ENCODE measurements at regions of chr10 and their contacts with region 1.

Region 1: DNA sequence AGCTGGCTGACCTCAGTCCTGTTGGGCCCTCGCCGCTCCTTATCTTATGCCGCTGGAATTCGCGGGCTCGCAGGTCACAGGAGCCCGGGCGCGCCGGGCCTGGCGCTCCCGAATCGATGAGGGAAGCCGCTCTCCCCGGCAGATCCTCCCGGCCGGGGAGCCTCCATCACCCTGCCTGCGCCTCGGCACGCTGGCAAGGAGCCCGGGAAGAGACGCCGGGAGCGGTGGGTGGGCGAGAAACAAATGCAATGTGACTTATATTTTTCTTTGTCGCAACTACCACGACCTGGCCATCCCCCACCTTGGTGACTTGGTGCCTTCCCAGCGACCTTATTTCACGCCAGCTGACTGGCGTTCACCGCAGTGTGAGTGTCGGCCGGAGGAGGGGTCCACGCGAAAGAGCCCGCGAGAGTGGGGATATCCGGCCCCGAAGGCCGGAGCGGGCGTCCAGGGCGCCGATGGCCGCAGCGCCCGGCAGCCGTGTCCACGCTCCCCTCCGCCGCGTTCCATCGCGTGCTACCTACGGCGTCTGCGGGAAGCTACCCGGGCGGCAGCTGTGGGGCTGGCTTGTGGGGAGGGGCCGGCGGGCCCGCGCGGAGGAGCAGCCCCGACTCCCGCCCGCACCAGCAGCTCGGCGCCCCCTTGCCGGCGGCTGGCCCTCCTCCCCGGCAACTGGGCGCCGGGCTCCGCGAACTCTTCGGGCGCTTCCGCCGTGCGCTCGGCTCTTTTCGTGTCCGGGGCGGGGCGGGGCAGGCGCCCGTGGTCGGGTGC is 494 bp upstream of the BMPR1A start:
- DNase-seq: peak; percentile 84 to 95 (median 91)
- ATAC-seq: peak; percentile 83 to 88 (median 88)
- H3K4me3 ChIP-seq: peak overlapping the region; percentile 58 to 83 (median 78)
- H3K27ac ChIP-seq: peak overlapping the region; percentile 83 to 100 (median 98)
- H3K4me1 ChIP-seq: peaks cover 0 to 45% (median 17%) of the 10 kb centered on the region in 12 donors
- H3K27me3 ChIP-seq: peaks cover 0 to 46% (median 8%) of the 10 kb centered on the region in 9 donors
- CTCF ChIP-seq: no peak
- POLR2A ChIP-seq: peak; percentile 77 to 85

Region 2: DNA sequence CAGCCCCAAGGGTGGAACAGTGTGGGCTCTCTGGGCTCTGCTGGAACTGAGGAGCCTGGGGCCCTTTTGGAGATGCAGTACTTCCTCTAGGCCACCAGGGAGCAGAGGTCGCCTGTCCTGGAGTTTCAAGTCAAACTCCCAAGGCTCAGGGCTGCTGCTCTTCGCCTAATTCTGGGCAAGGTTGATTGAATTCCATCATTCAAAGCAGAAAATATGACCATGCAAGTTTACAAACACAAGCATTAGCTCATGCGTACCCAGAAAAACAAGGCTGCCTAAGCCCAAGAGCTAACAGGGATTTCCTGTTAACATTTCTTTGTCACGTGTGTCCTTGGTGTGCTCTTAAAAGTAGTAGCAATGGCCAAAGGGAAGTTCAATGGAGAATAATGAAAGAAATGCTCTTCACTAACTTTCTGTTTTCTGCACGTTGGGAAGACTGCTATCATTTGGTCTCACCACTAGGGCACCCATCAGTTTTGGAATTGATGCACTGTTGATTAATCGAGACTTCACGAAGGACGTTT is 67.5 kb before region 1 on chr10:
- intact Hi-C with region 1: no loop called
- DNase-seq: peak in 4 of 5 donors; percentile 52 to 73 (median 70)
- ATAC-seq: no peak
- H3K4me3 ChIP-seq: no peak overlapping the region
- H3K27ac ChIP-seq: peak overlapping the region in 11 of 12 donors; percentile 22 to 99 (median 40)
- H3K4me1 ChIP-seq: peaks cover 0 to 72% (median 25%) of the 10 kb centered on the region in 12 donors
- H3K27me3 ChIP-seq: peaks cover 0 to 2% (median 0%) of the 10 kb centered on the region in 9 donors
- CTCF ChIP-seq: peak; percentile 68 to 85 (median 80)
- POLR2A ChIP-seq: no peak

Region 3: DNA sequence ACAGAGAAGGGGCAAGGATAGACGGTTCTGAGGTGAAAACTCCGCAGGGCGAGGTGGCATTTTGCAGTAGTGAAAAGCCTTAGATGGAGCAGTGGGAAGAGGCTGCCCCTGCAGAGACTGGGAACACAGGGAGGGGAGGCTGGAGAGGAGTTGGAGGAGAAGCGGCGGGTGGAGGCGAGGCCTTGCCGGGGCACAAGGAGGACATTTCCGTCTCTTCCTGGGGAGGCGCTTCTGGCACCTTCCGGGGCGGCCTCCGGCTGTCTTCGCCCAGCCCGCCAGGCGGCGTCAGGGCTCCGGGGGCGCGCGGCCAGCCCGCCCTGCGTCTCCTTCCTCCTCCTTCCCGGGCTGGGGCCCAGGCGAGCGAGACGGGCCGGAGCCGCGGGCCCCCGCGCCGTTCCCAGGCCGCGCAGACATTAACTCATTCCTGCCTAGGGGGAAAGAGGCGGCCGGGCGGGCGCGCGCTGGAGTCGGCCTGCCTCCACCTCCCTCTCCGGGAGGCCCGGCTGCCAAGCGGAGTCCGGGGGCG is 44.9 kb before region 1 on chr10:
- intact Hi-C with region 1: loop called in 1 of 10 experiments (anchors 5 kb)
- DNase-seq: peak; percentile 89 to 95 (median 89)
- ATAC-seq: peak; percentile 5 to 70 (median 65)
- H3K4me3 ChIP-seq: peak overlapping the region; percentile 40 to 84 (median 67)
- H3K27ac ChIP-seq: peak overlapping the region; percentile 64 to 98 (median 90)
- H3K4me1 ChIP-seq: peaks cover 4 to 81% (median 22%) of the 10 kb centered on the region in 12 donors
- H3K27me3 ChIP-seq: peaks cover 0 to 10% (median 0%) of the 10 kb centered on the region in 9 donors
- CTCF ChIP-seq: peak; percentile 63 to 93 (median 82)
- POLR2A ChIP-seq: peak in 1 of 2 donors; percentile 68

Region 4: DNA sequence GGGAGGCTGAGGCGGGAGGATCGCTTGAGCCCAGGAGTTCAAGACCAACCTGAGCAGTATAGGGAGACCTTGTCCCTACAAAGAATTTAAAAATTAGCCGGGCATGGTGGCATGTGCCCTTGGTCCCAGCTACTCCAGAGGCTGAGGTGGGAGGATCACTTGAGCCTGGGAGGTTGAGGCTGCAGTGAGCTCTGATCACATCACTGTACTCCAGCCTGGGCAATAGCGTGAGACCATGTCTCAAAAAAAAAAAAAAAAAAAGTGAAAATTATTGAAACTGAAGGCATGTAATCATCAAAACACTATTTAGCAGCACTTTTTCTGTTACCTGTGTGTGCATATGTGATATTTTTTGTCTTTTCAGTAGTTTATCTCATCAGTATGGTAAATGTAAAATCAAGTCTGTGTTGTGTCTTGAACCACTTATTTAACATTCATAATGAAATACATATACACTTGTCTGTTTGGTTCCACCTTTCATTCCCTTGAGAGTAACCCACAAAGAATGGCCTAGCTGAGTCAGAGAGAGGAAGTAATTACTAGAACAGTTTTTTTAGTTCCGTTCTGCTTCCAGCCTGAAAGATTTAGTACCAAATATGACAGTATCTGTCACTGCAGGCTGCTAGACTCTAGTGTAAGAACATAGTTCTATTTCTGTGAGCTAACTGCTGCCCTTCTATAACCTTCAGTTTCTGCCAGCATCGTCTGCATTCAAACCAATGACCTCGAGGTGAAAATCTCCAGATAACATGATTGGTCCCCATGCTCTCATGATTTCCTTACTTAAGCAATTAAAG is 132.9 kb after region 1 on chr10:
- intact Hi-C with region 1: loop called in 6 of 10 experiments (anchors 2 to 10 kb)
- DNase-seq: no peak
- ATAC-seq: peak; percentile 86 to 87 (median 87)
- H3K4me3 ChIP-seq: no peak overlapping the region
- H3K27ac ChIP-seq: peak overlapping the region; percentile 27 to 87 (median 72)
- H3K4me1 ChIP-seq: peaks cover 0 to 31% (median 16%) of the 10 kb centered on the region in 12 donors
- H3K27me3 ChIP-seq: no peaks in the 10 kb centered on the region
- CTCF ChIP-seq: no peak
- POLR2A ChIP-seq: no peak